GM10248 (cell line): ENCODE measurements at regions of chr11 and their contacts with region 1.

Region 1: GRCh38 chr11:72174299-72175070 is 17.5 kb upstream of the FOLR1 start:
- DNase-seq: no peak
- CTCF ChIP-seq: no peak

Region 2: GRCh38 chr11:72129381-72129780 is 45.1 kb before region 1 on chr11:
- CTCF ChIA-PET with region 1: no interaction called
- POLR2A ChIA-PET with region 1: no interaction called
- DNase-seq: no peak
- CTCF ChIP-seq: no peak

Region 3: GRCh38 chr11:72189461-72190275 is 15.2 kb after region 1 on chr11:
- CTCF ChIA-PET with region 1: interaction called, 15 read pairs
- POLR2A ChIA-PET with region 1: no interaction called
- DNase-seq: no peak
- CTCF ChIP-seq: no peak